Naive thymus-derived CD4-positive, alpha-beta T cell (primary cell): ENCODE measurements at regions of chr19 and their contacts with region 1.

Region 1: GRCh38 chr19:12777217-12778016 is 2.1 kb upstream of the HOOK2 start:
- DNase-seq: peak; percentile 69 to 89 (median 82)
- ATAC-seq: peak; percentile 18
- H3K4me3 ChIP-seq: peak overlapping the region; percentile 76
- H3K4me3 Mint-ChIP-seq: peak overlapping the region; percentile 82 to 95 (median 87)
- H3K27ac ChIP-seq: peak overlapping the region; percentile 94
- H3K27ac Mint-ChIP-seq: peak overlapping the region; percentile 42 to 98 (median 94)
- H3K4me1 ChIP-seq: peaks cover 16 to 28% of the 10 kb centered on the region in 2 donors
- H3K4me1 Mint-ChIP-seq: peaks cover 20 to 45% (median 39%) of the 10 kb centered on the region in 7 donors
- H3K27me3 ChIP-seq: no peaks in the 10 kb centered on the region
- H3K27me3 Mint-ChIP-seq: no peaks in the 10 kb centered on the region

Region 2: GRCh38 chr19:12766051-12766521 is 11.3 kb before region 1 on chr19:
- CTCF ChIA-PET with region 1: interaction called, 38 read pairs
- POLR2A ChIA-PET with region 1: interaction called, 8 read pairs
- intact Hi-C with region 1: loop called in 1 of 2 experiments (anchors 1 kb)
- DNase-seq: peak in 8 of 9 donors; percentile 64 to 89 (median 72)
- ATAC-seq: peak; percentile 92
- H3K4me3 ChIP-seq: no peak overlapping the region
- H3K4me3 Mint-ChIP-seq: peak overlapping the region in 3 of 10 donors; percentile 7 to 60 (median 44)
- H3K27ac ChIP-seq: no peak overlapping the region
- H3K27ac Mint-ChIP-seq: no peak overlapping the region
- H3K4me1 ChIP-seq: no peaks in the 10 kb centered on the region
- H3K4me1 Mint-ChIP-seq: peaks cover 0 to 9% (median 0%) of the 10 kb centered on the region in 7 donors
- H3K27me3 ChIP-seq: no peaks in the 10 kb centered on the region
- H3K27me3 Mint-ChIP-seq: no peaks in the 10 kb centered on the region

Region 3: GRCh38 chr19:12806239-12807081 is 29.0 kb after region 1 on chr19 and contains the start of gene RNASEH2A:
- CTCF ChIA-PET with region 1: interaction called, 169 read pairs
- POLR2A ChIA-PET with region 1: interaction called, 31 read pairs
- intact Hi-C with region 1: no loop called
- DNase-seq: peak; percentile 74 to 87 (median 84)
- ATAC-seq: peak; percentile 95
- H3K4me3 ChIP-seq: peak within 1 kb of the TSS; percentile 73
- H3K4me3 Mint-ChIP-seq: peak within 1 kb of the TSS; percentile 81 to 96 (median 91)
- H3K27ac ChIP-seq: peak within 1 kb of the TSS; percentile 70
- H3K27ac Mint-ChIP-seq: peak within 1 kb of the TSS; percentile 71 to 94 (median 89)
- H3K4me1 ChIP-seq: peaks cover 18% of the 10 kb centered on the region in 2 donors
- H3K4me1 Mint-ChIP-seq: peaks cover 15 to 26% (median 21%) of the 10 kb centered on the region in 7 donors
- H3K27me3 ChIP-seq: no peaks in the 10 kb centered on the region
- H3K27me3 Mint-ChIP-seq: peaks cover 0 to 6% (median 0%) of the 10 kb centered on the region in 5 donors
- total RNA-seq, gene RNASEH2A: 1.6 to 30.9 (median 9.3) TPM

Region 4: DNA sequence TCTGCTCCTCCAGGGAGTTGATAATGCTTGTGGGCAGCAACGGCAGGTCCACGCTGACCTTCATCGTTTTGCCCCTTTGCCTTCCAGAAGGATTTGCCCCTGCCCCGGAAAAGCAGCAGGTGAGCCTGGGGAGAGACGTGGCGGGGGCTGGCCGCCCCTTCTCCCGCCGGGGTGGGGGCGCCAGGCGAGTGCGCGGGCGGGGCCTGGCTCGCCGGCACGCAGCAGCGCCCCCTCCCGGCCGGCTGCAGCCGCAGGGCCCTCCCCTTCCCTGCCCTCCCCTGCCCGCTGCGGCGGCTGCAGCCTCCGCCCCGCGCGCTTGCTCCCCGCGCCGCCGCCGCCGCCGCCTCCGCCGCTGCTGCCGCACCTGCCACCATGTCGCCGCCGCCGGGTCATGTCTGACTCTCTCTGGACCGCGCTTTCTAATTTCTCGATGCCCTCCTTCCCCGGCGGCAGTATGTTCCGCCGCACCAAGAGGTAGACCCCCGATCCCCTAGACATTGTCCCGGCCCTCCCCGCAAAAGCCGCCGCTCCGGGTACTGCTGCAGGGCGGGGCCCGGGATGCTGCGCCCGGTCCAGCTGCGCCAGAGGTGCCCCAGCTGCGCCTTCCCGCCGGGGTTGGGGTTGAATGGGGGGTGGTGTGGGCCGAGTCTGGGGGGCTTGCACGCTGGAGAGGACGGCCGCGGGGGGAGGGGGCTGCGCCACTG is 60.9 kb after region 1 on chr19 and contains the start of gene MAST1:
- CTCF ChIA-PET with region 1: no interaction called
- POLR2A ChIA-PET with region 1: no interaction called
- intact Hi-C with region 1: loop called in 1 of 2 experiments (anchors 2 kb)
- DNase-seq: peak in 7 of 9 donors; percentile 37 to 78 (median 52)
- ATAC-seq: peak; percentile 84
- H3K4me3 ChIP-seq: no peak within 1 kb of the TSS
- H3K4me3 Mint-ChIP-seq: peak within 1 kb of the TSS; percentile 58 to 79 (median 72)
- H3K27ac ChIP-seq: no peak within 1 kb of the TSS
- H3K27ac Mint-ChIP-seq: peak within 1 kb of the TSS in 3 of 9 donors; percentile 12 to 30 (median 24)
- H3K4me1 ChIP-seq: peaks cover 8 to 11% of the 10 kb centered on the region in 2 donors
- H3K4me1 Mint-ChIP-seq: peaks cover 0 to 46% (median 29%) of the 10 kb centered on the region in 7 donors
- H3K27me3 ChIP-seq: peaks cover 16 to 33% of the 10 kb centered on the region in 2 donors
- H3K27me3 Mint-ChIP-seq: peaks cover 69 to 74% (median 73%) of the 10 kb centered on the region in 5 donors
- total RNA-seq, gene MAST1: 0.51 to 0.93 (median 0.71) TPM in 4 of 5 experiments, not detected in the other